SK-N-SH (cell line): ENCODE measurements at regions of chr22 and their contacts with region 1.

Region 1: GRCh38 chr22:46087336-46088277 is 62.7 kb upstream of the PPARA start:
- DNase-seq: peak; percentile 94
- H3K4me3 ChIP-seq: peak overlapping the region; percentile 90 to 92
- H3K27ac ChIP-seq: peak overlapping the region; percentile 96 to 100
- H3K4me1 ChIP-seq: peaks cover 41 to 97% of the 10 kb centered on the region in 2 experiments
- H3K27me3 ChIP-seq: no peaks in the 10 kb centered on the region
- CTCF ChIP-seq: no peak
- EP300 ChIP-seq: peak; percentile 21 to 48; a peak in 3 of 4 replicates
- RAD21 ChIP-seq: peak; percentile 17

Region 2: GRCh38 chr22:46071451-46072109 is 16.0 kb before region 1 on chr22:
- CTCF ChIA-PET with region 1: interaction called, 18 read pairs
- POLR2A ChIA-PET with region 1: interaction called, 83 read pairs
- DNase-seq: peak; percentile 88
- H3K4me3 ChIP-seq: peak overlapping the region; percentile 90 to 92
- H3K27ac ChIP-seq: peak overlapping the region; percentile 96 to 100
- H3K4me1 ChIP-seq: peaks cover 6 to 33% of the 10 kb centered on the region in 2 experiments; a peak in 3 of 4 replicates
- H3K27me3 ChIP-seq: no peaks in the 10 kb centered on the region
- CTCF ChIP-seq: no peak
- EP300 ChIP-seq: peak; percentile 15 to 57; a peak in 1 of 4 replicates
- RAD21 ChIP-seq: no peak; the same call in 1 of the 2 replicates

Region 3: GRCh38 chr22:46108564-46109473 is 21.2 kb after region 1 on chr22:
- CTCF ChIA-PET with region 1: interaction called, 73 read pairs
- POLR2A ChIA-PET with region 1: interaction called, 7 read pairs
- DNase-seq: peak; percentile 75
- H3K4me3 ChIP-seq: no peak overlapping the region
- H3K27ac ChIP-seq: peak overlapping the region; percentile 60 to 98
- H3K4me1 ChIP-seq: peaks cover 43 to 92% of the 10 kb centered on the region in 2 experiments
- H3K27me3 ChIP-seq: no peaks in the 10 kb centered on the region
- CTCF ChIP-seq: peak; percentile 17; the same call in 1 of the 2 replicates
- EP300 ChIP-seq: no peak
- RAD21 ChIP-seq: no peak